ENCODE measurements at regions of chr12 and their contacts with region 1.

Region 1: DNA sequence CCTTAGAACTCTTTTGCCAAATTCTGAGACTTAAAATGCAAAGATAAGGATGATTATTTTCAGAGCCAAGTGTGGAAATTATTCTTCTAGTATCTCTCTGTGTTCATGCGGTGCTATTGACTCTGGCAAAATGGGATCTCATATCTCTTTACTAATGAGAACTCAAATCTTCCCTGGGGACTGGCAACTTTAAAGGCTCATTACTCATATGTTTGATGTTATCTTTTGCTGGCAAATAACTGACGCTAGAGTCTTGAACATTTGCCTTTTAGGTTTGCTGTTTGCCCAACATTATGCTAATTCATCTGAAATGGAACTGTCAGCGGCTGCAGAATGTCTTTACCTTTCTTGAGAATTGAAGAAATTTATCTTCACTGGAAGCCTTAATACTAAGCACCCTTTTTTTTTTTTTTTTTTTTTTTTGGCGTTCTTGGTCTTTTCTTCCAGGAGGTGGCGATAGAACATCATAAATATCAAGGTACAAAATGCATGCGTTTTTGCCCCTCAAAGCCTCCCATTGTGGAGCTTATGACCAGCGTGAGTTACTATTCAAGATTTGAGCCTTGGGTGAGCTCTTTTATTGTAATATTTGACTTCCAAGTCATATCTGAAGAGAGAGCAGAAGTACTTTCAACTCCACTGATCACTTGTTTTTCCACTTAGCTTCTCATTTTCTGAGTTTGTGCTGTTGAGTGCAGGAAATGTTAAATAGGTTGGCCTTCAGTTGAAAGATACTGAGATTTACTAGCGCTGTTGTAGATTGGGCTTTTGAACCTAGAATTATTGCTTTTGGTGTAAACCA is 86.6 kb downstream of the CAND1 start:
- DNase-seq: no peak
- H3K4me3 Mint-ChIP-seq: no peak overlapping the region
- H3K27ac Mint-ChIP-seq: no peak overlapping the region
- H3K4me1 Mint-ChIP-seq: peaks cover 19% of the 10 kb centered on the region
- H3K27me3 Mint-ChIP-seq: no peaks in the 10 kb centered on the region

Region 2: GRCh38 chr12:67943226-67943892 is 587.6 kb after region 1 on chr12:
- CTCF ChIA-PET with region 1: interaction called, 102 read pairs
- POLR2A ChIA-PET with region 1: interaction called, 3 read pairs
- DNase-seq: peak; percentile 59
- H3K4me3 Mint-ChIP-seq: no peak overlapping the region
- H3K27ac Mint-ChIP-seq: no peak overlapping the region
- H3K4me1 Mint-ChIP-seq: no peaks in the 10 kb centered on the region
- H3K27me3 Mint-ChIP-seq: peaks cover 7% of the 10 kb centered on the region

Measured in activated CD4-positive, alpha-beta memory T cell treated with anti-CD3 and anti-CD28 coated beads, Interleukin-2, amount 10 ng/mL, durations not matched to agents 7 days and 5 days (primary cell).